OCI-LY7 (cell line): ENCODE measurements at regions of chr2 and their contacts with region 1.

Region 1: GRCh38 chr2:218898109-218898878 is 17.6 kb downstream of the WNT10A start:
- DNase-seq: peak; percentile 76
- H3K4me3 ChIP-seq: no peak overlapping the region
- H3K27ac ChIP-seq: no peak overlapping the region
- H3K4me1 ChIP-seq: peaks cover 55% of the 10 kb centered on the region
- CTCF ChIP-seq: peak; percentile 94

Region 2: GRCh38 chr2:218885981-218886947 is 12.0 kb before region 1 on chr2:
- CTCF ChIA-PET with region 1: interaction called, 25 read pairs
- POLR2A ChIA-PET with region 1: interaction called, 86 read pairs
- intact Hi-C with region 1: no loop called
- DNase-seq: peak; percentile 59
- H3K4me3 ChIP-seq: no peak overlapping the region
- H3K27ac ChIP-seq: no peak overlapping the region
- H3K4me1 ChIP-seq: peaks cover 50% of the 10 kb centered on the region
- CTCF ChIP-seq: no peak